BJ (cell line): ENCODE measurements at regions of chr5 and their contacts with region 1.

Region 1: GRCh38 chr5:126339215-126339805 is 83.9 kb upstream of the GRAMD2B start:
- DNase-seq: no peak
- H3K4me3 ChIP-seq: no peak overlapping the region
- H3K27me3 ChIP-seq: no peaks in the 10 kb centered on the region
- CTCF ChIP-seq: peak; percentile 66

Region 2: GRCh38 chr5:126354012-126354857 is 14.9 kb after region 1 on chr5:
- CTCF ChIA-PET with region 1: interaction called, 44 read pairs
- POLR2A ChIA-PET with region 1: interaction called, 3 read pairs
- DNase-seq: peak; percentile 96
- H3K4me3 ChIP-seq: peak overlapping the region; percentile 17; the same call in 1 of the 2 replicates
- H3K27me3 ChIP-seq: no peaks in the 10 kb centered on the region
- CTCF ChIP-seq: peak; percentile 40

Region 3: GRCh38 chr5:126544087-126544740 is 204.9 kb after region 1 on chr5:
- CTCF ChIA-PET with region 1: interaction called, 52 read pairs
- POLR2A ChIA-PET with region 1: no interaction called
- DNase-seq: no peak
- H3K4me3 ChIP-seq: no peak overlapping the region
- H3K27me3 ChIP-seq: no peaks in the 10 kb centered on the region
- CTCF ChIP-seq: peak; percentile 65

Region 4: GRCh38 chr5:126594676-126595485 is 255.6 kb after region 1 on chr5 and contains the start of gene ALDH7A1:
- CTCF ChIA-PET with region 1: interaction called, 27 read pairs
- POLR2A ChIA-PET with region 1: no interaction called
- DNase-seq: peak; percentile 63
- H3K4me3 ChIP-seq: peak within 1 kb of the TSS; percentile 59
- H3K27me3 ChIP-seq: no peaks in the 10 kb centered on the region
- CTCF ChIP-seq: peak; percentile 69
- polyA plus RNA-seq, gene ALDH7A1: 81.2 and 99.9 TPM in 2 replicates

Region 5: DNA sequence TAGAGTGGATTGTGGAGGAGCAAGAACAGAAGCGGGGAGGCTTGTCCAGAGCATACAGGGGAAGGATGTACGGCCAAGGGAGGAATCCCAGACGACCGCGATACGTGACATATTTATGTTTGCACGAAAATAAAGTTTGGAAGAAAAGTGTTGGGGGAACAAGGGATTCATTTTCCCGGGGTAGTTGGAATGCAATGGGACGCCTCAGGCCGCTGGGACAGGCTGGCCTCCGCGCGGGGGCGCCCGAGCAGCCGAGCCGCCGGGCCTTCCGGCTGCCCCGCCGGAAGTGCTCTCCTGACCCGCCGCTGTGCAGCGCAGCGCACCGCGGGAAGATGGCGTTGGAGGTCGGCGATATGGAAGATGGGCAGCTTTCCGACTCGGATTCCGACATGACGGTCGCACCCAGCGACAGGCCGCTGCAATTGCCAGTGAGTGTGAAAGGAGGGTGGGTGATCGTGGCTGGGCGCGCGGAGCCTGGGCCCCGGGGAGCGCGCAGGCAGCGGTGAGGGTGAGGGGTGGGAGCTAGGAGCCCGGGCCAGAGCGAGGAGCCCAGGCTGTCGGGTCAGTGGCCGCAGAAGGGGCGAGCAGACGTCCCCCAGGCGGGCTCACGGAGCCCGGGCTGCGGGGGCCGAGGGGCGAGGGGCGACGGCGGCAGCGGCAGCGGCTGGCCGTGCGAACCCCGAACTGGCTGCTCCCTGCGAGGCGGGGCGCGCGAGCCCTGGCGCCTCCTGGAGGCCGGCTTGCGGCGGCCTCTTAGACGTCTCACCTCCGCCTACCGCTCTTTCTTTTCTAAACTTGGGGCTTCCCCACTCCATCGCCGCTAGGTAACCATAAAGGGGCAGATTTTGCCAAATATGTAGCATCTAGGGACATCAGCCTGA is 261.6 kb after region 1 on chr5 and contains the start of gene PHAX:
- CTCF ChIA-PET with region 1: interaction called, 27 read pairs
- POLR2A ChIA-PET with region 1: no interaction called
- DNase-seq: peak; percentile 21
- H3K4me3 ChIP-seq: peak within 1 kb of the TSS; percentile 87
- H3K27me3 ChIP-seq: no peaks in the 10 kb centered on the region
- CTCF ChIP-seq: peak; percentile 71
- polyA plus RNA-seq, gene PHAX: 40.7 and 41.6 TPM in 2 replicates